ENCODE measurements at regions of chr9 and their contacts with region 1.

Region 1: GRCh38 chr9:127785023-127785932 is 556 bp upstream of the CDK9 start:
- H3K4me3 Mint-ChIP-seq: peak overlapping the region; percentile 97
- H3K27ac Mint-ChIP-seq: peak overlapping the region; percentile 85
- H3K4me1 Mint-ChIP-seq: peaks cover 75% of the 10 kb centered on the region
- H3K27me3 Mint-ChIP-seq: no peaks in the 10 kb centered on the region

Region 2: GRCh38 chr9:127707726-127708147 is 77.5 kb before region 1 on chr9:
- intact Hi-C with region 1: no loop called
- H3K4me3 Mint-ChIP-seq: no peak overlapping the region
- H3K27ac Mint-ChIP-seq: no peak overlapping the region
- H3K4me1 Mint-ChIP-seq: peaks cover 24% of the 10 kb centered on the region
- H3K27me3 Mint-ChIP-seq: peaks cover 23% of the 10 kb centered on the region

Region 3: GRCh38 chr9:127763918-127764384 is 21.3 kb before region 1 on chr9:
- intact Hi-C with region 1: loop called (anchors 1 kb)
- H3K4me3 Mint-ChIP-seq: no peak overlapping the region
- H3K27ac Mint-ChIP-seq: peak overlapping the region; percentile 51
- H3K4me1 Mint-ChIP-seq: peaks cover 77% of the 10 kb centered on the region
- H3K27me3 Mint-ChIP-seq: no peaks in the 10 kb centered on the region

Region 4: GRCh38 chr9:127770905-127771569 is 14.2 kb before region 1 on chr9:
- intact Hi-C with region 1: loop called (anchors 1 kb)
- H3K4me3 Mint-ChIP-seq: peak overlapping the region; percentile 96
- H3K27ac Mint-ChIP-seq: peak overlapping the region; percentile 95
- H3K4me1 Mint-ChIP-seq: peaks cover 69% of the 10 kb centered on the region
- H3K27me3 Mint-ChIP-seq: no peaks in the 10 kb centered on the region

Region 5: DNA sequence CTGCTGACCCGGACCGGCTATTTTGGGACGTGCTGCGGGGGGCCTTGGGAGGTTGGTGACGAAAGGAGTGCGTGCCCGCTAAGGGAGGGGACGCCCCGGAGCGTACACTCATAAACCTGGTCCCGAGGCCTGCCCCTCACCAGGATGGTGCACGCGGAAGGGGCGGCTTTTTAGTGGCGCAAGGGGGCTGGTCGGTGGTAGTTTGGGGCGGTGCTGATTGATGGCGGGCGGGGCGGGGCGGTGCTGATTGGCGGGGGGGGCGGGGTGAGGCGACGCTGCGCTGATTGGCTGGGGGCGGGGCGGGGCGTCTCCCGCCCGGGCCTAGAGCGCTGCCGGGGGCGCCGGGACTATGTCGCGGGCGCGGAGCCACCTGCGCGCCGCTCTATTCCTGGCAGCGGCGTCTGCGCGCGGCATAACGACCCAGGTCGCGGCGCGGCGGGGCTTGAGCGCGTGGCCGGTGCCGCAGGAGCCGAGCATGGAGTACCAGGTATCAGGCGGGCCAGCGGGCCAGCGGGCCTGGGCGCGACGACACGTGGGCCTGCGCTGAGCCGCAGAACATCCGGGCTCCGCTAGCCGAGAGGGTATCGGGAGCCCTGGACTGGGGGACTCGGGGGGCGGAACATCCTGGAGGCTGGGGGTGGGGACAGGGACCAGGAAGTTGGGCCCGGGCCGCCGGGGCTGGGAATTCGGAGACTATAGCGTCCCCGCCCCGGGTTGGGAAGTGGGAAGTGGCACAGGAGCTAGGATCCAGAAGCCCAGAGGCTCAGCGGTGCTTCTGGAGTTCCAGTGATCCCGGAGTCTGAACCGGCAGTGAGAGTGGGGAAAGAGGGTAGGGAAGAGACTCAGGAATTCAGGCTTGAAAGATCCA is 17.5 kb after region 1 on chr9 and contains the start of gene FPGS:
- intact Hi-C with region 1: loop called (anchors 2 kb)
- H3K4me3 Mint-ChIP-seq: peak within 1 kb of the TSS; percentile 83
- H3K27ac Mint-ChIP-seq: peak within 1 kb of the TSS; percentile 93
- H3K4me1 Mint-ChIP-seq: peaks cover 41% of the 10 kb centered on the region
- H3K27me3 Mint-ChIP-seq: peaks cover 1% of the 10 kb centered on the region

Region 6: GRCh38 chr9:127869310-127870152 is 84.3 kb after region 1 on chr9:
- intact Hi-C with region 1: loop called (anchors 5 kb)
- H3K4me3 Mint-ChIP-seq: no peak overlapping the region
- H3K27ac Mint-ChIP-seq: peak overlapping the region; percentile 28
- H3K4me1 Mint-ChIP-seq: peaks cover 40% of the 10 kb centered on the region
- H3K27me3 Mint-ChIP-seq: peaks cover 1% of the 10 kb centered on the region

Region 7: DNA sequence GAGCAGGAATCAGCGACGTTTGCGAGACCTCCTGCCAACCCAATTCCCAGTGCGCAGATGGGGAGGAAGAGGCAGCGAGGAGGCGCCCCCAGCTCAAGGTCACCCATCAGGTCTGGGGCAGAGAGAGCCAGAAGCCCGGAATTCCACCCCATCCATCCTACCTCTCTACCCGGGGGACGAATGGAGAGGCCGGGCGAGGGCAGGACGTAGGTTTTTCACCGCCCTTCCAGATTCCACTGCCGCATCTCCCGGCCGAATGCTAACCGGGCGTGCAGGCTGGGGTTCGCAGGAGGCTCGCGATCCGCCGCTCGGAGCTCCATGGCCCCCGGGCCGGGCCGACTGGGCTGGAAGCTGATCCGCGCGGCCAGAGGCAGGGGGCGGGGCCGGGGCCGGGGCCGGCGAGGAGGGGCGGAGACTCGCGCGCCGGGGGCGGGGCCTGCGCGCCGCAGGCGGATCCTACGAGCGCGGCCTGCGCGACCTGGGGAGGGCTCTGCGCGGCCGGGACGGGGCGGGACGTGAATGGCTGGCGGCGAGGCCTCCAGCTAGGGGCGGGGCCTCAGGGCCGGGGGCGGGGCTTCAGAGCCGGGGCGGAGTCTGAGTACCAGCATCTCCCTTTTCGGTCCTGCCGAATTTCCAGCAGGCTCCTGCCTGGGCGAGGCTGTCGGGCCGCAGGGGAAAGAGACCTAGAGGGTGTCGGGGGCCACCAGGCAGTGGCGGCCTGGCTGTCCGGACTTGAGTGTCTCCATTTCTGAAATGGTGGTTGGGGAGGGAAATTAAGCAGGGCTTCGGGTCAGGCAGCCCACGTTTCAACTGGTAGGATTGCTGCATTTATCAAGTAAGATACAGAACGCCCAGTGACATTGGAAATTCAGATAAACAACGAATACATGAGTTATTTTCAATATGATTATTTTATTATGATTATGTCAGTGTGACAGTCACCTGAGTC is 131.7 kb after region 1 on chr9 and contains the start of gene ST6GALNAC4:
- intact Hi-C with region 1: loop called (anchors 5 kb)
- H3K4me3 Mint-ChIP-seq: peak within 1 kb of the TSS; percentile 86
- H3K27ac Mint-ChIP-seq: peak within 1 kb of the TSS; percentile 86
- H3K4me1 Mint-ChIP-seq: peaks cover 77% of the 10 kb centered on the region
- H3K27me3 Mint-ChIP-seq: peaks cover 6% of the 10 kb centered on the region